ENCODE measurements at regions of chr15 and their contacts with region 1.

Region 1: GRCh38 chr15:77186594-77187011 is 115.7 kb upstream of the TSPAN3 start:
- DNase-seq: no peak
- H3K4me3 Mint-ChIP-seq: no peak overlapping the region
- H3K27ac Mint-ChIP-seq: no peak overlapping the region
- H3K4me1 Mint-ChIP-seq: peaks cover 60% of the 10 kb centered on the region
- H3K27me3 Mint-ChIP-seq: no peaks in the 10 kb centered on the region

Region 2: GRCh38 chr15:76987926-76988860 is 198.4 kb before region 1 on chr15:
- intact Hi-C with region 1: loop called (anchors 10 kb)
- DNase-seq: peak; percentile 76
- H3K4me3 Mint-ChIP-seq: peak overlapping the region; percentile 58
- H3K27ac Mint-ChIP-seq: peak overlapping the region; percentile 99
- H3K4me1 Mint-ChIP-seq: peaks cover 62% of the 10 kb centered on the region
- H3K27me3 Mint-ChIP-seq: no peaks in the 10 kb centered on the region

Region 3: DNA sequence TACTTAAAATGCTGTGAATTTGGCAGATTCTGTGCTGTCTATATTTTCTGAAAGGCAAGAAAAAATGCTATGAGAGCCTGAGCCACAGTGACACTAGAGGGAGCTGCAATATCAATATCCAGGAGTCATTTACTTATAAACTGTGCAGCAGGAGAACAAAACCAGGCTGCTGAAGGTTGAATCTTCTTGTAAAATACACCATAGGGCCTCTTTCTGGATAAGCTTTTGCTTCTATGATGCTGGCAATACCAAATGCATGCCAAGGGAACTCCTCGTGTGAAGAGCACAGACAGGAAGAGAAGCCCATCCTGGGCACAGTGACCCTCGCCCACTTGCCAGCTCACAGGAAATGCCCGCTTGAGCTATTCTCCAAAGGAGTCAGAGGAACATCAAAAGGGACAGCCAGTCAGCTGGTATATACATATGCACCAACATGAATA is 67.7 kb before region 1 on chr15:
- intact Hi-C with region 1: loop called (anchors 10 kb)
- DNase-seq: no peak
- H3K4me3 Mint-ChIP-seq: no peak overlapping the region
- H3K27ac Mint-ChIP-seq: no peak overlapping the region
- H3K4me1 Mint-ChIP-seq: peaks cover 14% of the 10 kb centered on the region
- H3K27me3 Mint-ChIP-seq: no peaks in the 10 kb centered on the region

Region 4: GRCh38 chr15:77402740-77403379 is 216.3 kb after region 1 on chr15:
- intact Hi-C with region 1: loop called (anchors 5 kb)
- DNase-seq: no peak
- H3K4me3 Mint-ChIP-seq: no peak overlapping the region
- H3K27ac Mint-ChIP-seq: peak overlapping the region; percentile 33
- H3K4me1 Mint-ChIP-seq: peaks cover 37% of the 10 kb centered on the region
- H3K27me3 Mint-ChIP-seq: no peaks in the 10 kb centered on the region

Region 5: GRCh38 chr15:77419836-77420609 is 233.4 kb after region 1 on chr15 and contains the start of gene PEAK1:
- intact Hi-C with region 1: loop called (anchors 5 kb)
- DNase-seq: peak; percentile 98
- H3K4me3 Mint-ChIP-seq: peak within 1 kb of the TSS; percentile 96
- H3K27ac Mint-ChIP-seq: peak within 1 kb of the TSS; percentile 97
- H3K4me1 Mint-ChIP-seq: peaks cover 35% of the 10 kb centered on the region
- H3K27me3 Mint-ChIP-seq: no peaks in the 10 kb centered on the region
- total RNA-seq, gene PEAK1: 26.0 and 27.0 TPM in 2 replicates

Region 6: GRCh38 chr15:77496710-77497103 is 310.1 kb after region 1 on chr15:
- intact Hi-C with region 1: loop called (anchors 1 kb)
- DNase-seq: peak; percentile 52
- H3K4me3 Mint-ChIP-seq: no peak overlapping the region
- H3K27ac Mint-ChIP-seq: no peak overlapping the region
- H3K4me1 Mint-ChIP-seq: peaks cover 15% of the 10 kb centered on the region
- H3K27me3 Mint-ChIP-seq: no peaks in the 10 kb centered on the region

Region 7: GRCh38 chr15:77543159-77543882 is 356.7 kb after region 1 on chr15:
- intact Hi-C with region 1: loop called (anchors 1 kb)
- DNase-seq: peak; percentile 66
- H3K4me3 Mint-ChIP-seq: peak overlapping the region; percentile 73
- H3K27ac Mint-ChIP-seq: no peak overlapping the region
- H3K4me1 Mint-ChIP-seq: peaks cover 5% of the 10 kb centered on the region
- H3K27me3 Mint-ChIP-seq: peaks cover 9% of the 10 kb centered on the region